ENCODE measurements at regions of chr18 and their contacts with region 1.

Region 1: GRCh38 chr18:76492669-76493212 is 2.3 kb downstream of the ZNF516 start:
- DNase-seq: peak; percentile 99
- ATAC-seq: peak; percentile 57
- H3K4me3 ChIP-seq: peak overlapping the region; percentile 81
- H3K27ac ChIP-seq: peak overlapping the region; percentile 78
- H3K4me1 ChIP-seq: peaks cover 11% of the 10 kb centered on the region
- H3K27me3 ChIP-seq: no peaks in the 10 kb centered on the region
- CTCF ChIP-seq: no peak
- POLR2A ChIP-seq: no peak
- RAD21 ChIP-seq: no peak

Region 2: GRCh38 chr18:76410660-76411417 is 81.9 kb before region 1 on chr18:
- CTCF ChIA-PET with region 1: no interaction called
- POLR2A ChIA-PET with region 1: no interaction called
- dilution Hi-C with region 1: no loop called
- in situ Hi-C with region 1: no loop called
- intact Hi-C with region 1: loop called (anchors 5 kb)
- DNase-seq: no peak
- ATAC-seq: no peak
- H3K4me3 ChIP-seq: no peak overlapping the region
- H3K27ac ChIP-seq: no peak overlapping the region
- H3K4me1 ChIP-seq: peaks cover 5% of the 10 kb centered on the region
- H3K27me3 ChIP-seq: no peaks in the 10 kb centered on the region
- CTCF ChIP-seq: no peak
- POLR2A ChIP-seq: no peak
- RAD21 ChIP-seq: no peak

Region 3: DNA sequence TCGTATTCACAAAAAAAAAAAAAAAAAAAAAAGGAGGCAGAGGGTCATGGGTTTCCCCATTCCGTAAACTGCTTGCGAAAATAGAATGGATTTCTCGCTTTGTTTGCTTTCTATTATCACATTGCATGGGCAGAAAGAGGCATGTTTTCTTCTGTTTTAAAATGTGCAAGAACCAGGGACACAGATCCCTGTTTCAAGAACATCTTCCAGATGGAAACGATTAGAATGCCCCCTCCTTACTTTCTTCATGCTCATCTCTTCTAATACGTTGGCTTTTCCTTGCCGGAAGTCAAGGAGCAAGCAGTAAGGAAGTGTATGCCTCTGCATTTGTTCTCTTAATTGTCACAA is 53.3 kb after region 1 on chr18:
- CTCF ChIA-PET with region 1: no interaction called
- POLR2A ChIA-PET with region 1: no interaction called
- dilution Hi-C with region 1: no loop called
- in situ Hi-C with region 1: no loop called
- intact Hi-C with region 1: no loop called
- DNase-seq: no peak
- ATAC-seq: no peak
- H3K4me3 ChIP-seq: no peak overlapping the region
- H3K27ac ChIP-seq: no peak overlapping the region
- H3K4me1 ChIP-seq: peaks cover 2% of the 10 kb centered on the region; the same call in 1 of the 2 replicates
- H3K27me3 ChIP-seq: peaks cover 3% of the 10 kb centered on the region; the same call in 1 of the 2 replicates
- CTCF ChIP-seq: no peak
- POLR2A ChIP-seq: no peak
- RAD21 ChIP-seq: no peak

Region 4: GRCh38 chr18:76565238-76566180 is 72.8 kb after region 1 on chr18:
- CTCF ChIA-PET with region 1: no interaction called
- POLR2A ChIA-PET with region 1: no interaction called
- dilution Hi-C with region 1: no loop called
- in situ Hi-C with region 1: loop called (anchors 5 kb)
- intact Hi-C with region 1: loop called (anchors 2 kb)
- DNase-seq: peak; percentile 96
- ATAC-seq: peak; percentile 97
- H3K4me3 ChIP-seq: peak overlapping the region; percentile 55
- H3K27ac ChIP-seq: peak overlapping the region; percentile 97
- H3K4me1 ChIP-seq: peaks cover 16% of the 10 kb centered on the region
- H3K27me3 ChIP-seq: no peaks in the 10 kb centered on the region
- CTCF ChIP-seq: no peak
- POLR2A ChIP-seq: no peak; the same call in 1 of the 2 replicates
- RAD21 ChIP-seq: no peak

Region 5: DNA sequence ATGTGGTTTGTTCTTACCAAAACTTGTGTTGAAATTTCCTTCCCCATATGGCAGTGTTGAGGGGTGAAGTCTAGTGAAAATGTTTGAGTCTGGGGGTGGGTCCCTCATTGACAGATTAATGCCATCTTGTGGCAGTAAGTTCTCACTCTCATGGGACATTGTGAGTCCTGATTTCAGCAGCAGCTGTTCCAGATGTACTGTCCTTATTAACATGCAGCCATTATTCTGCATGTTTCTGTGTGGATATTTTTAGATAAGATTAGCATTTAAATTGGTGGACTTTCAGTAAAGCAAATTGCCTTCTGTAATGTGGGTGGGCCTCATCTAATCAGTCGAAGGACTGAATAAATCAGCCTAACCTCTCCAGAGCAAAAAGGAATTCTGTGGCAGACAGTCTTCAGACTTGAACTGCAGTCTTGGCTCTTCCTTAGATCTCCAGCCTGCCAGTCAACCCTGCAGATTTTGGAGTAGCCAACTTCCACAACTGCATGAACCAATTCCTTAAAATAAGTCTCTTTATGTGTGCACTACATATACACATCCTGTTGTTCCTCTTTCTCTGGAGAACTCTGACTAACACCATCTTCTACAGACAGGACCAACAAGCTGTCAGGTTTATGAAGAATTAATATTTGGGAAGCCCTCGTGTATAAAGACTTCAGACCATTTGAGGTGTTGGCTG is 141.0 kb after region 1 on chr18:
- CTCF ChIA-PET with region 1: no interaction called
- POLR2A ChIA-PET with region 1: no interaction called
- dilution Hi-C with region 1: no loop called
- in situ Hi-C with region 1: no loop called
- intact Hi-C with region 1: no loop called
- DNase-seq: no peak
- ATAC-seq: no peak
- H3K4me3 ChIP-seq: no peak overlapping the region
- H3K27ac ChIP-seq: no peak overlapping the region
- H3K4me1 ChIP-seq: no peaks in the 10 kb centered on the region
- H3K27me3 ChIP-seq: peaks cover 12% of the 10 kb centered on the region
- CTCF ChIP-seq: no peak
- POLR2A ChIP-seq: no peak
- RAD21 ChIP-seq: no peak

Region 6: DNA sequence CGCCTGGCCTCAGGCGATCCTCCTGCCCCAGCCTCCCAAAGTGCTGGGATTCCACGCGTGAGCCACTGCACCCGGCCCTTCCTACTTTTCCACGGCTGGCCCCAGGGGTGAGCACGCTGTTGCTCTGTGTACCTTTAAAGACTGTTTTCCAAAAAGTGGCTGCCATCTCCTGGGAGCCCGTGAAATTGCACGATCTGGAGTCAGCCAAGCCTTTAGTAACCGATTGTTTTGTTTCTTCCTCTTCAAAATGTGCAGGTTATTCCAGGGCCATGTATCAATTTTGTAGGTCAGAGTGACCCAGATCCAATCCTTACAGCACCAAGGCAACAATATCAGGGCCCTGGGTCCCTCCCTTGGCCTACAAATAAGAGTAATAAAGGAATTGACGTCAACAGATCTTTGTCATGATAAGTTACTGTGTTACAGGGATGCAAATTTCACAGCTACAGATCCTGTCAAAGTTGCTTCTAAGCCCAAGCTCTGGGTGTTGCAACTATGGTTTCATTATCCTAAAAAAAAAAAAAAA is 194.1 kb after region 1 on chr18:
- CTCF ChIA-PET with region 1: no interaction called
- POLR2A ChIA-PET with region 1: no interaction called
- dilution Hi-C with region 1: no loop called
- in situ Hi-C with region 1: no loop called
- intact Hi-C with region 1: loop called (anchors 2 kb)
- DNase-seq: peak; percentile 57
- ATAC-seq: peak; percentile 97
- H3K4me3 ChIP-seq: no peak overlapping the region
- H3K27ac ChIP-seq: no peak overlapping the region
- H3K4me1 ChIP-seq: no peaks in the 10 kb centered on the region; the same call in 1 of the 2 replicates
- H3K27me3 ChIP-seq: peaks cover 44% of the 10 kb centered on the region
- CTCF ChIP-seq: peak; percentile 73
- POLR2A ChIP-seq: no peak
- RAD21 ChIP-seq: peak; percentile 80

Measured in IMR-90 (cell line).